Head of caudate nucleus (tissue), 42 donors: ENCODE measurements at regions of chr12 and their contacts with region 1.

Region 1: DNA sequence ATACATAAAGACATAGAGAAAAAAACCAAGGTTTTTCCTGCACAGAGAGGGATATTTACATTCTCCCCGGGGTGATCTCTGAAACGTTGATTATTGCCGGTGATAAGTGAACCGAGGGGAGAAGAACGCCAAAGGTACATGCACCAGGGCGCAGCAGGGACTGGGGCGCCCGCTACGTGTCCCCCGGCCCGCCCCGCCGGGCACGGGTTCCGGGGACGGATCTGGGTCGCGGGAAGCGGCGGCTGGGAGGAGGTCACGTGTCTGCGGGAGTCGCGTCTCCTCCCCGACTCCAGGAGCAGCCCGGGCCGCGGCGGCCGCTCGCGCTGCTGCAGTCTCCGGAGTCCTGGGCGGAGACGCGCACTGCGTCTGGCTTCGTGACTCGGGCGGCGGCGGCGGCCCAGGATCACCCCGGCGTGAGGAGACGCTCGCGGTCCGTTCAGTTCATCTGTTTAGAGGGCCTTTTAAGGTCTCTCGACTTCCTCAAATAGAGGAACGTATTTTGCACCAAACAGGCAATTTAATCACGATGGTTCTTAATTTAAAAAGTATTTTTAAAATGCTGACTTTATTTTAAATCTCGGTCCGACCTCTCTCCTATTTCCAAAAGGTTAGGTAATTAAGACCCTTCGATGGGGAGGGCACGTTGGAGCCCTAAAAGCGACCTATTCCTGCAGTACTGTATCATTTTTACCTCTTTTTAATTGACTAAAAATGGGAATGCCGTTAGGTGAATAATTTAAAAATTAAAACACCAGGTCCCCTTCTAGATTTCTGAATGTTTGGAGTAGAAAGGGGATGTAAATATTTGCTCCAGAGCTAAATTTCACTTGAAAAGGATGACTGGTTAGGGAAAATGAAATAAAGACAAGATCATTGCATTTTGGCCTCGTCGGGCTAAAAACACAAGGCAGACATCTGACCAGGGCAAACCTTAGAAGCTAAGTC is 1.8 kb upstream of the BHLHE41 start:
- DNase-seq: peak; percentile 66 to 96 (median 90)

Region 2: GRCh38 chr12:26195641-26196420 is 69.2 kb after region 1 on chr12:
- intact Hi-C with region 1: loop called (anchors 2 kb)
- DNase-seq: peak; percentile 56 to 89 (median 79)

Region 3: DNA sequence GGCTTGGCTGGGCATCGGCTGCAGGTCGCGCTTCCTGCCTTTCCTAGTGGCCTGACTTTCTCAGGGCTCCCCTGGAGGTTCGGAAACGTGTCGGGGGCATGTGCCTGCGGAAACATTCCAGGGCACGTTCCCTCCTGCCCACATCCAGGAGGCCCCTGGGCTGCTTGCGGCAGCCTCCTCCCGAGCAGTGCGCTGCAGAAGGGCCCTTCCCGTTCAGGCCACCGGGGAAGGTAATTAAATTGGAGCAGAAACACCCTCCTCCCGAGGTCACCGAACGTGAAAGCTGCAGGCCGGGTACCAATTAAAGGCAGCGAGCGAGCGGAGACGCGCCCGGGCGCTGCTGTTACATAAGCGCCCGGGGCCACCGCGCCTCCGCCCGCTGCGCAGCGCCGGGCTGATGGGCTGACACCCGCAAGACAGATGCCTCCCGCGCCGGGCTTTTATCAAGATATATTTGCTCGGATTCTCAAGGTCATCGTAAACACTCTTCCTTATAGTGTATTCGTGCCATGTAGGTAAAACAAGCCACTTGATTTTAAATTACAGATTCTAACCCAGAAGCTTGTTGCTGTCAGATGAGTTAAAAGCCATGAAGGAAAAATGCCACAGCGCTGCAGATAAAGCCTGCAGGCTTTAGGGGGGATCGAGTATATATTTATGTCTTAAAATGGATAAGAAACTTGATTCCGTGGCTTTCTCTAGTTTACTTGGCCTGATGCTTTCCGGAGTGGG is 100.2 kb after region 1 on chr12:
- intact Hi-C with region 1: loop called (anchors 10 kb)
- DNase-seq: peak; percentile 36 to 86 (median 70)

Region 4: GRCh38 chr12:26338586-26339572 is 212.3 kb after region 1 on chr12:
- intact Hi-C with region 1: loop called (anchors 2 kb)
- DNase-seq: peak in 41 of 42 donors; percentile 24 to 91 (median 78)

Region 5: DNA sequence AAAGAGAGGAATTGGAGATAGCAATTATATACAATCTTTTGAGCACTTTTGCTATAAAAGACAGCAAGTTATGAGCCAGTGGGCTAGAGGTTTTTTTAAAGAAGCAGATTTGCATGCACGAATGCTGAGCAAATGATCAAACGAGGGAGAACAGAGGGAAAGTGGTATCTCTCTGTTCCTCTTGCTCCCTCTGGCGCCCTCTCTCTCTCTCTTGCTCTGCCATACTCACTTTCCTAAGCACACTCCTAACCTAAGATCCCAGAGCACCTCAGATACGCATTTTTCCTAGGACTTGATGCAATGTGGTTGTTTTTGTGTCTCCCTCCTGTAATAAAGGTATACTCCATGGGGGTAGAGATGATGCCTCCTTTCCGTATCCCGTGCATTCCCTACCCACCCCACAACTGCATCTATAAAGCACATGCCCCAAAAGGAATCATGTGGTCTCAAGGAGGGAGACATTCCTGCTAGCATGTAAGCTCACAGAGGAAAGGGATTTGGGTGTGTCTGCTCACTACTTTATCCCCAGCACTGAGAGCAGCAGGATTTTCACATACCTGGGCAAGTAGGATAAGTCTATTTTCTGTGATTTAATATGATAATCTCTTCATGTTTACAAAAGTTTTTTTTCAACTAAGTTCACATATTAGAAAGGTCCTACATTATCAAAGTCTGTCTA is 338.9 kb after region 1 on chr12:
- intact Hi-C with region 1: loop called (anchors 10 kb)
- DNase-seq: peak in 13 of 42 donors; percentile 18 to 66 (median 31)